Transverse colon (tissue), 4 donors: ENCODE measurements at regions of chr13 and their contacts with region 1.

Region 1: GRCh38 chr13:28100150-28101121 is at the start of gene FLT3:
- DNase-seq: peak; percentile 62
- H3K4me3 ChIP-seq: peak within 1 kb of the TSS in 3 of 4 donors; percentile 31 to 51 (median 36)
- H3K27ac ChIP-seq: no peak within 1 kb of the TSS
- H3K4me1 ChIP-seq: peaks cover 0 to 16% (median 11%) of the 10 kb centered on the region in 4 donors
- H3K27me3 ChIP-seq: peaks cover 92% of the 10 kb centered on the region
- CTCF ChIP-seq: no peak
- EP300 ChIP-seq: no peak
- POLR2A ChIP-seq: no peak
- total RNA-seq, gene FLT3: 0.55 to 0.95 TPM in 2 of 4 donors, not detected in the others

Region 2: DNA sequence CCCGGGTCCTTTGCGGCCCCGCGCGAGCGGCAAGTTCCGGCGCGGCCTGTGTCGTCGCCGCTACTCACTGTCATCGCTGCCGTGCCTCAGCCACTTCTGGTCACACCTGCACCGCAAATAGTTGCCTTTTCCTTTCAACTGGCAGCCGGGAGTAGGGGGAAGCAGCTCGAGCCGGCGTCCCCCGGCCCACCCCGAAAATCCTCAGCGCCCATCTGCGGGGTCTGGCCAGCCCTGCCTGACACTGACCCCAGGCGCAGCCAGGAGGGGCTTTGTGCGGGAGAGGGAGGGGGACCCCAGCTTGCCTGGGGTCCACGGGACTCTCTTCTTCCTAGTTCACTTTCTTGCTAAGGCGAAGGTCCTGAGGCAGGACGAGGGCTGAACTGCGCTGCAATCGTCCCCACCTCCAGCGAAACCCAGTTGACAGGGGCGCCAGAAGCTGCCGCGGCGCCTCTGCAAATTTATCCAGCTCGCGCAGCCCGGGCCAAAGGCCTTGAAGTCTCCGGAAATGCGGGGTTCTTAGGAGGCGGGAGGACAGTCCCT is 178.9 kb before region 1 on chr13:
- in situ Hi-C with region 1: no loop called
- intact Hi-C with region 1: no loop called
- DNase-seq: no peak
- H3K4me3 ChIP-seq: peak overlapping the region; percentile 11 to 63 (median 38)
- H3K27ac ChIP-seq: no peak overlapping the region
- H3K4me1 ChIP-seq: peaks cover 5 to 48% (median 44%) of the 10 kb centered on the region in 4 donors
- H3K27me3 ChIP-seq: peaks cover 100% of the 10 kb centered on the region
- CTCF ChIP-seq: no peak
- EP300 ChIP-seq: no peak
- POLR2A ChIP-seq: no peak

Region 3: DNA sequence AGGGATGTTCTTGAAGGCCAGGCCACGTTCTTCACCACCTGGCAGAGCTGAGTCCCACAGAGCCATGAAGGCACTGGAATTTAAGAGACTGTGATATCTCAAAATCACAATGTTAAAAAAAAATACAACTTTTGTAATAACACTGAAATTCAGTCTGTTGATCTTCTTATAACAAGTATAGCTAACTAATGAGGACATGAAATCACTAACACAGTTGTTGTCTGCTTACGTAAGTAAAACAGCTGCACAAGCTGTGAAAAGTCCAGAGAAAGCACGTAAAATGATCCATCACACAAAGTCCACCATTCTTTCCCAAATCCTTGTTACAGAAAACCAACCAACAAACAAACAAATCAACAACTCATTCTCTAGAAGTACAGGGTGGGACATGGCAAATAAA is 32.9 kb before region 1 on chr13:
- in situ Hi-C with region 1: no loop called
- intact Hi-C with region 1: loop called (anchors 1 kb)
- DNase-seq: no peak
- H3K4me3 ChIP-seq: no peak overlapping the region
- H3K27ac ChIP-seq: no peak overlapping the region
- H3K4me1 ChIP-seq: no peaks in the 10 kb centered on the region
- H3K27me3 ChIP-seq: no peaks in the 10 kb centered on the region
- CTCF ChIP-seq: no peak
- EP300 ChIP-seq: no peak
- POLR2A ChIP-seq: no peak

Region 4: DNA sequence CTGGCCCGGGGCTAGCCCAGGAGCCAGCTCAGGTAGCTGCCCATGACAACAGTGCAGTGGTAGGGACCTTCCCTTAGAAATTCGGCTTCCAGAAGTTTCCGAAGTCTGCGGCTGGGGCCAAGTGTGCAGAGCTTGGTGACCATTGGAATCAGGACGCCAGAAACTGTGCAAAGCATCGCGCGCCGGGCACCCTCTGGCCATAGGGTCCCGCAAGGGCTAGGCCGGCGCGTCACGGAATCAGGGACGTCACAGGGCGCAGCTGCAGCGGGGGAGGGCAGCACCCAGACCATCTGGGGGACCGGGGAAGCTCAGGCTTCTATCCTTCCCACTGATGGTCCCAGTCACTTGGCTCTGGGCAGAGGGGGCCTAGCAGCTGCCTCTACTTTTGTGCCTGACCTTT is 938.8 kb after region 1 on chr13:
- in situ Hi-C with region 1: no loop called
- intact Hi-C with region 1: no loop called
- DNase-seq: no peak
- H3K4me3 ChIP-seq: no peak overlapping the region
- H3K27ac ChIP-seq: no peak overlapping the region
- H3K4me1 ChIP-seq: no peaks in the 10 kb centered on the region
- H3K27me3 ChIP-seq: no peaks in the 10 kb centered on the region
- CTCF ChIP-seq: no peak
- EP300 ChIP-seq: no peak
- POLR2A ChIP-seq: no peak